PC-3 (cell line): ENCODE measurements at regions of chr1 and their contacts with region 1.

Region 1: DNA sequence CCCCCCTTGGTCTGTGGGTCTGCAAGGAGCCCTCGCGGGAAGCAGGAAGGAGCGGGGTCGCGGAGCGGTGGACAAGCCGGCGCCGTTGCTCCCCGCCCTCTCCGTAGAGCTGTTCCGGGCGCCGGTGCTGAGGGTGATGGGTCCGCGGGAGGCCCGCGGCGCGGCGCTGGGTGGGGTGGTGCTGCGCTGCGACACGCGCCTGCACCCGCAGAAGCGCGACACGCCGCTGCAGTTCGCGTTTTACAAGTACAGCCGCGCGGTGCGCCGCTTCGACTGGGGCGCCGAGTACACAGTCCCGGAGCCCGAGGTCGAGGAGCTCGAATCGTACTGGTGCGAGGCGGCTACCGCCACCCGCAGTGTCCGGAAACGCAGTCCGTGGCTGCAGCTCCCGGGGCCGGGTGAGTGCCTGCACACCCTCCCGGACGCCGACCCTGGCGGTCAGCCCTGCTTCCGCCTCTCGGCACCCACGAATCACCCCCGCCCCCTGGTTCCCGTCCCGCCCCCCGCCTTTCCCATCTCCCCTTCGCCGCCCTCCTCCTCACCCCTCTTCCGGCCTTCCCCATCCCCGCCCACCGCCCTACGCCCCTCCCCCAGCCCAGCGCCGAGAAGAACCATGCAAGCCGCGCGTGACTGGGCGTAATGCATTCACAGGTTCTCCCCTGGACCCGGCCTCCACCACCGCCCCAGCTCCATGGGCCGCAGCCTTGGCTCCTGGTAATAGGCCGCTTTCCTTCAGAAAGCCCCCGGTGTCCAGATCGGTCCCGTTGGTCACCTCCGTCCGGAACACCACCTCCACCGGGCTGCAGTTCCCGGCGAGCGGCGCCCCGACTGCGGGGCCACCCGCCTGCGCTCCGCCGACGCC is 5.5 kb downstream of the FCRLB start:
- DNase-seq: peak; percentile 81
- ATAC-seq: peak; percentile 62
- H3K4me3 ChIP-seq: peak overlapping the region; percentile 85
- H3K27ac ChIP-seq: peak overlapping the region; percentile 72
- H3K4me1 ChIP-seq: peaks cover 77% of the 10 kb centered on the region
- H3K27me3 ChIP-seq: no peaks in the 10 kb centered on the region
- CTCF ChIP-seq: no peak

Region 2: GRCh38 chr1:161738627-161739287 is 11.9 kb after region 1 on chr1:
- CTCF ChIA-PET with region 1: interaction called, 15 read pairs
- POLR2A ChIA-PET with region 1: interaction called, 4 read pairs
- intact Hi-C with region 1: no loop called
- DNase-seq: peak; percentile 91
- ATAC-seq: peak; percentile 58
- H3K4me3 ChIP-seq: no peak overlapping the region
- H3K27ac ChIP-seq: no peak overlapping the region
- H3K4me1 ChIP-seq: peaks cover 47% of the 10 kb centered on the region
- H3K27me3 ChIP-seq: no peaks in the 10 kb centered on the region
- CTCF ChIP-seq: peak; percentile 92

Region 3: DNA sequence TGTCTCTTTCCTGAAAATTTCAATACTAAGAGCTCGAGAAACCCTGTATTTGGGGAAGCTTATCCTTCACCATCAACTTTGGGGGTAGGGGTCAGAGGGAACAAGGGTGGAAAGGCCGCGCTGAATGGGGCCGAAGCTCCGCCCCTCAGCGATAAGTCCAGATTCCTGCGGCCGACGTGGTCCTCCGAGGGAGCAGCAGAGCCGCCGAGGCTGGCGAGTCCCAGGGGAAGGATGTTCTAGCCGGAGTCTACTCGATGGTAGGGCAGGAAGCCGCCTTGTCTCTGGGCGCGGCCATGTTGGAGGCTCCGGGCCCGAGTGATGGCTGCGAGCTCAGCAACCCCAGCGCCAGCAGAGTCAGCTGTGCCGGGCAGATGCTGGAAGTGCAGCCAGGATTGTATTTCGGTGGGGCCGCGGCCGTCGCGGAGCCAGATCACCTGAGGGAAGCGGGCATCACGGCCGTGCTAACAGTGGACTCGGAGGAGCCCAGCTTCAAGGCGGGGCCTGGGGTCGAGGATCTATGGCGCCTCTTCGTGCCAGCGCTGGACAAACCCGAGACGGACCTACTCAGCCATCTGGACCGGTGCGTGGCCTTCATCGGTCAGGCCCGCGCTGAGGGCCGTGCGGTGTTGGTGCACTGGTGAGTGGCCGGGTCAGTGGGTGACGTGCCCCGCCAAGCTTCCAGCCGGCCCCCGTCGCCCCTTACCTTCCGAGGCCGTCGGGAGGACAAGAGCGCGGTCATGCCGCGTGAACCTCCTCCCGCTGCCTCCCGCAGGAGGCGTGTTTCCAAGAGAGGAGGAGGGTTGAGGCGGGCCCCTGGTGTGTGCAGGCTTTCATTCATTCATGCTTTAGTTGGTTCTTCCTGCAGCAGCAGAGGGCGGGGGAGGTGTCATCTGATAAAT is 22.9 kb after region 1 on chr1 and contains the start of gene DUSP12:
- CTCF ChIA-PET with region 1: no interaction called
- POLR2A ChIA-PET with region 1: no interaction called
- intact Hi-C with region 1: no loop called
- DNase-seq: peak; percentile 96
- ATAC-seq: peak; percentile 96
- H3K4me3 ChIP-seq: peak within 1 kb of the TSS; percentile 89
- H3K27ac ChIP-seq: peak within 1 kb of the TSS; percentile 86
- H3K4me1 ChIP-seq: peaks cover 20% of the 10 kb centered on the region
- H3K27me3 ChIP-seq: no peaks in the 10 kb centered on the region
- CTCF ChIP-seq: peak; percentile 36
- total RNA-seq, gene DUSP12: 82.2 and 97.6 TPM in 2 replicates